Ascending aorta (tissue), 2 donors: ENCODE measurements at regions of chr1 and their contacts with region 1.

Region 1: GRCh38 chr1:150808121-150808520 is at the start of gene CTSK:
- DNase-seq: peak in 1 of 2 donors; percentile 64
- H3K4me3 ChIP-seq: peak within 1 kb of the TSS; percentile 47 to 56
- H3K27ac ChIP-seq: peak within 1 kb of the TSS; percentile 19 to 23
- H3K4me1 ChIP-seq: peaks cover 0 to 2% of the 10 kb centered on the region in 2 donors
- H3K27me3 ChIP-seq: no peaks in the 10 kb centered on the region
- CTCF ChIP-seq: no peak
- total RNA-seq, gene CTSK: 44.0 TPM

Region 2: DNA sequence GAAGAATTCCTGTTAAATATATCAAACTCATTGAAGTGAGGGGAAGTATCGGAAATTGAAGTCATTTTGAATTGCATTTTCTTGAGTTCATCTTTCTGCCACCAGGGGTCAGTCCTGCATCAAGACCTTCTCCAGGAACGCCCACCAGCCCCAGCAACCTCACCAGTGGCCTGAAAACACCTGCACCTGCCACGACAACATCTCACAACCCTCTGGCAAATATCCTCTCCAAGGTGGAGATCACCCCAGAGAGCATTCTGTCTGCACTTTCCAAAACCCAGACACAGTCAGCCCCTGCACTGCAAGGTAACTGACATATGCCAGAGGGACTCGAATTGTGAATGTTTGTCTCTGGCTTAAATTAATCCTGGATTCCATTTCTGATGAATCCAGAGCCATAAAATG is 343.7 kb before region 1 on chr1:
- intact Hi-C with region 1: loop called (anchors 10 kb)
- DNase-seq: no peak
- H3K4me3 ChIP-seq: no peak overlapping the region
- H3K27ac ChIP-seq: no peak overlapping the region
- H3K4me1 ChIP-seq: no peaks in the 10 kb centered on the region
- H3K27me3 ChIP-seq: no peaks in the 10 kb centered on the region
- CTCF ChIP-seq: peak; percentile 70 to 82 (median 77)